ENCODE measurements at regions of chr17 and their contacts with region 1.

Region 1: GRCh38 chr17:55690105-55690508 is 32.6 kb downstream of the TMEM100 start:
- DNase-seq: peak; percentile 58
- H3K4me3 ChIP-seq: no peak overlapping the region
- H3K27ac ChIP-seq: peak overlapping the region in 1 of 2 experiments; percentile 99; a peak in 2 of 4 replicates
- H3K4me1 ChIP-seq: peaks cover 0 to 54% of the 10 kb centered on the region in 2 experiments; a peak in 3 of 4 replicates
- H3K27me3 ChIP-seq: no peaks in the 10 kb centered on the region
- CTCF ChIP-seq: no peak
- EP300 ChIP-seq: peak; percentile 22 to 99; a peak in 2 of 4 replicates
- RAD21 ChIP-seq: peak; percentile 38

Region 2: GRCh38 chr17:55705849-55706248 is 15.7 kb after region 1 on chr17:
- CTCF ChIA-PET with region 1: interaction called, 19 read pairs
- POLR2A ChIA-PET with region 1: interaction called, 5 read pairs
- DNase-seq: no peak
- H3K4me3 ChIP-seq: no peak overlapping the region
- H3K27ac ChIP-seq: no peak overlapping the region; a peak in 1 of 4 replicates
- H3K4me1 ChIP-seq: peaks cover 0 to 18% of the 10 kb centered on the region in 2 experiments; a peak in 2 of 4 replicates
- H3K27me3 ChIP-seq: peaks cover 7% of the 10 kb centered on the region; the same call in 1 of the 2 replicates
- CTCF ChIP-seq: no peak
- EP300 ChIP-seq: no peak
- RAD21 ChIP-seq: no peak

Region 3: DNA sequence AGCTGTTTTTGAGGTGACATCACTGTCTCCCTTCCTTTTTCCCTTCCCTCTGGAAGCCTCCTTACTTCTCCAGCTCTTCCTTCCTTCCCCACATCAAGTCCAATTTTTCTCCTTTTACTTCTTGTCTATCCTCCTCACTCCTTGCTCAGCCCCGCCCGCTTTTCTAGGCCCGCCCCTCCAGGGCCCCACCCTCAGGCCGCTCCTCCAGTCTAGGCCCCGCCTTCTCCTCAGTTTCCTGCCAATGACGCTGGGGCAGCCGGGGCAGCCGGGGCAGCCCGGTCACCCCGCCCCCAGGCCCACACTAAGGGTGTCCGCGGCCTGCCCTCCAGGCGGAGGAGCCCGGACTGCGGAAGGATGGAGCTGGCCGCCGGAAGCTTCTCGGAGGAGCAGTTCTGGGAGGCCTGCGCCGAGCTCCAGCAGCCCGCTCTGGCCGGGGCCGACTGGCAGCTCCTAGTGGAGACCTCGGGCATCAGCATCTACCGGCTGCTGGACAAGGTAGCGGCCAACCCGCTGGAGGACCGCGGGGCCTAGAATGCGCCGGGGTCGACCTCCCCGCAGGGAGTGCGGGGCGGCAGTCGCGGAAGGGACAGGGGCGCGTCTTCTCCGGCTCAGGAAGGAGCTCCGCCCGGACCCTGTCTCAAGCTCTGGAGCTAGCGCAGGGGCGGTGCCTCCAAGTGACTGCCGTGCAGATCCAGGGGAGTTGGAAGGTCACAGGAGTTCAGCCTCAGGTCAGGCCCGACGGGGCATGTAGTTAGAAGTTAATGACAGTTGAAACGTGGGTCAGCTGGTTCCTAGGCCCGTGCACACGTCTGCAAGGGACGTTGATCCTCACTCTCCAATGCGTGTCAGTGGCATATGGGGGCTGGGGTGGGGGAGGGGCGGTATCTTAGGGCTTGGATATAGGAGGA is 60.9 kb after region 1 on chr17 and contains the start of gene PCTP:
- CTCF ChIA-PET with region 1: interaction called, 13 read pairs
- POLR2A ChIA-PET with region 1: no interaction called
- DNase-seq: peak; percentile 98
- H3K4me3 ChIP-seq: peak within 1 kb of the TSS; percentile 86 to 98
- H3K27ac ChIP-seq: peak within 1 kb of the TSS; percentile 74 to 94
- H3K4me1 ChIP-seq: peaks cover 0 to 10% of the 10 kb centered on the region in 2 experiments; a peak in 2 of 4 replicates
- H3K27me3 ChIP-seq: no peaks in the 10 kb centered on the region
- CTCF ChIP-seq: peak; percentile 52
- EP300 ChIP-seq: peak in 1 of 2 experiments; percentile 66; a peak in 1 of 4 replicates
- RAD21 ChIP-seq: peak; percentile 32
- polyA plus RNA-seq, gene PCTP: 20.8 and 25.1 TPM in 2 replicates

Region 4: GRCh38 chr17:55794725-55795482 is 104.8 kb after region 1 on chr17:
- CTCF ChIA-PET with region 1: no interaction called
- POLR2A ChIA-PET with region 1: no interaction called
- DNase-seq: no peak
- H3K4me3 ChIP-seq: no peak overlapping the region
- H3K27ac ChIP-seq: no peak overlapping the region
- H3K4me1 ChIP-seq: no peaks in the 10 kb centered on the region
- H3K27me3 ChIP-seq: no peaks in the 10 kb centered on the region
- CTCF ChIP-seq: no peak
- EP300 ChIP-seq: no peak
- RAD21 ChIP-seq: no peak